Sigmoid colon (tissue), 7 donors: ENCODE measurements at regions of chr1 and their contacts with region 1.

Region 1: DNA sequence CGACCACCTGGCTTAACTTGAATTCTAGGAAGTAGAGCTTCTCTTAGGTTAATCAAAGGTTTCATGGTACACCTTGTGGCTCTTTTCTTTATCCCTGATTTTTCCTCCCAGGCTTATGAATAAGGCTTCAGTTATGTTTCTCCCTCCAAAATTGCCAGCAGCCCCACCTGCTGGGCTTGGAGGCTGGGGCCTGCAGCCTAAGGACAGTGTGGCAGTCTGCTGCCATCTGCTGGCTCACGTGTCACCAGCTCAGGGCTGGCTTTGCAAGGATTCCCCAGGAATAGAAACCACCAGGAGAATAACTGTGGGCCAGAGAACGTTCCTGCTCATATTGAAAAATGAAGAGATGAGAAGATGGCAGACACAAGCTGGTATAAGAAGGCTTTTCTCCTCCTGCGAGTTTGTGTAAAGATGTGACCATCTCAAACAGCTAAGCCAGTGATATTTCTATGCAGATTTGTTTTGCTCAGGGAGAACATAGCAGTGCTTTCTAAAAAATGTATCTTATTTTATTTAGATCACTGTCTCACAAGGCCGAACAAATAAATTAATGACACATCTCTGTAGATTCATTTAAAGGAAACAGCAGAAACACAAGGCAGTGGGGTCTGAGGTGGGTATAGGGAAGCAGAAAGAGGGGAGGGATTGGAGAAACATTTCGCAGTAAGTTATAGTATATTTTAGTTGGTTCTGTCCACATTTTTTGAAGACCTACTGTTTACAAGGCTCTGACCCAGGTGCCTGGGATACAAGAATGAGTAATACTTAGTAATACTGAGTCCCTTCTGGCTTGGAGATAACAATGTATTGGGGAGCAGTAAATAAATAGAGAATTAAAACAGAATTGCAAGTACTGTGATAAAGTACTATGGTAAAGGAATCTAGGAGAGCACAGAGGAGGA is 291.1 kb upstream of the SGIP1 start:
- DNase-seq: peak; percentile 95
- H3K4me3 ChIP-seq: no peak overlapping the region
- H3K27ac ChIP-seq: no peak overlapping the region
- H3K4me1 ChIP-seq: peaks cover 0 to 17% (median 2%) of the 10 kb centered on the region in 4 donors
- H3K27me3 ChIP-seq: no peaks in the 10 kb centered on the region
- CTCF ChIP-seq: peak; percentile 97 to 100 (median 99)
- EP300 ChIP-seq: no peak
- POLR2A ChIP-seq: no peak

Region 2: GRCh38 chr1:65958561-65959350 is 284.1 kb before region 1 on chr1:
- intact Hi-C with region 1: loop called (anchors 1 kb)
- DNase-seq: no peak
- H3K4me3 ChIP-seq: no peak overlapping the region
- H3K27ac ChIP-seq: no peak overlapping the region
- H3K4me1 ChIP-seq: peaks cover 0 to 14% (median 12%) of the 10 kb centered on the region in 4 donors
- H3K27me3 ChIP-seq: no peaks in the 10 kb centered on the region
- CTCF ChIP-seq: peak; percentile 58 to 81 (median 66)
- EP300 ChIP-seq: no peak
- POLR2A ChIP-seq: no peak